Activated CD8-positive, alpha-beta T cell treated with anti-CD3 and anti-CD28 coated beads for 36 hours (primary cell): ENCODE measurements at regions of chr19 and their contacts with region 1.

Region 1: GRCh38 chr19:38402967-38403861 is at the start of gene FAM98C:
- DNase-seq: no peak
- ATAC-seq: peak; percentile 99
- H3K4me3 Mint-ChIP-seq: peak within 1 kb of the TSS; percentile 83
- H3K27ac Mint-ChIP-seq: peak within 1 kb of the TSS; percentile 88
- H3K4me1 Mint-ChIP-seq: peaks cover 9% of the 10 kb centered on the region
- H3K27me3 Mint-ChIP-seq: peaks cover 3% of the 10 kb centered on the region
- CTCF ChIP-seq: peak; percentile 99
- total RNA-seq, gene FAM98C: 11.7 to 12.5 TPM

Region 2: DNA sequence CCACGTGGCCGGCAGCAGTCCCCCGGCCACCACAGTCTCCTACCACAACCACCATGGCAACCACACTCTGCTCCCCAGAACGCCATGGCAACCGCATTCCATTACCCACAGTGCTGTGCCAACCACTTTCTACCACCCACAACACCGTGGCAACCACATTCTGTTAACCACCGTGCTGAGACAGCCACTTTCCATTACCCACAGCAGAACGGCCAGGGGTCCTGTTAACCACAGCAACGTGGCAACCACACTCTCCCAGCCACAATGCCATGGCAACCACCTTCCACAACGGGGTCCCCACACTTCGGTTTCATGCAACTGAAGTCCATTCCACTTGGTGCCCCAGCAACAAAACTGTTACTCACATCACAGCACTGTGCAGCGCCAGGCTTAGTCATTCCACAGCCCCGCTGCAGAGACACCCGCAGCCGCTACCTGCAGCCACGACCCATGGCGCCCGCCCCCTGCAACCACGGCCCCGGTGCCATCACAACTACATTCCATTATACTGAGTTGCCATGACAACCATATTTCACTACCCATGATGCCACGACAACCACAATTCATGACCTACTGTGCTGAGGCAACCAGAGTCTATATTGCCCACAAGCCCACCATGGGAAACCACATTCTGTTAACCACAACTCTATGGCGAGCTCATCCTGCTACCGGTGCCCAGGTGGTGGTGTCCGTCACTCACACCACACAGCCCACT is 189.1 kb before region 1 on chr19:
- CTCF ChIA-PET with region 1: no interaction called
- POLR2A ChIA-PET with region 1: no interaction called
- intact Hi-C with region 1: no loop called
- DNase-seq: peak; percentile 92
- ATAC-seq: peak; percentile 90
- H3K4me3 Mint-ChIP-seq: peak overlapping the region; percentile 63
- H3K27ac Mint-ChIP-seq: peak overlapping the region; percentile 84
- H3K4me1 Mint-ChIP-seq: peaks cover 23% of the 10 kb centered on the region
- H3K27me3 Mint-ChIP-seq: peaks cover 60% of the 10 kb centered on the region
- CTCF ChIP-seq: no peak

Region 3: DNA sequence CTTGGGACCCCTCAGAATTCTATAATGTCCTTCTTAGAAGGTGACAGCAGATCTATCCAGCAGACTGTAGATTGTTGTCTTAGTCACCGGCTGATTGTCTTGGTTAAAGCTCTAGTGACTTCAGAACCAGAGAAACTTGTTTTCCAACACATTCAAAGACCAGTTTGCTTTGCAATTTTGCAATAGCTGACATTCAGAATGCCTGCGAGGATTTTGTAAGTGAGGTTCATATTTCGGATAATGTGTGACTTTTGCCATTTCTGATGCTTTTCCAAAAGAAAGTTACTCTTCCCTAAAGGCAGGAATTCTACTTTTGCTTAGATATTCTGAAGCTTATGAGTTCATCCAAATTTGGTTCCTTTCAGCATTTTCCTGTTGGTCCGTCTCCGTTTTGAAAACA is 125.7 kb before region 1 on chr19:
- CTCF ChIA-PET with region 1: no interaction called
- POLR2A ChIA-PET with region 1: no interaction called
- intact Hi-C with region 1: no loop called
- DNase-seq: no peak
- ATAC-seq: no peak
- H3K4me3 Mint-ChIP-seq: no peak overlapping the region
- H3K27ac Mint-ChIP-seq: no peak overlapping the region
- H3K4me1 Mint-ChIP-seq: peaks cover 14% of the 10 kb centered on the region
- H3K27me3 Mint-ChIP-seq: no peaks in the 10 kb centered on the region
- CTCF ChIP-seq: no peak

Region 4: DNA sequence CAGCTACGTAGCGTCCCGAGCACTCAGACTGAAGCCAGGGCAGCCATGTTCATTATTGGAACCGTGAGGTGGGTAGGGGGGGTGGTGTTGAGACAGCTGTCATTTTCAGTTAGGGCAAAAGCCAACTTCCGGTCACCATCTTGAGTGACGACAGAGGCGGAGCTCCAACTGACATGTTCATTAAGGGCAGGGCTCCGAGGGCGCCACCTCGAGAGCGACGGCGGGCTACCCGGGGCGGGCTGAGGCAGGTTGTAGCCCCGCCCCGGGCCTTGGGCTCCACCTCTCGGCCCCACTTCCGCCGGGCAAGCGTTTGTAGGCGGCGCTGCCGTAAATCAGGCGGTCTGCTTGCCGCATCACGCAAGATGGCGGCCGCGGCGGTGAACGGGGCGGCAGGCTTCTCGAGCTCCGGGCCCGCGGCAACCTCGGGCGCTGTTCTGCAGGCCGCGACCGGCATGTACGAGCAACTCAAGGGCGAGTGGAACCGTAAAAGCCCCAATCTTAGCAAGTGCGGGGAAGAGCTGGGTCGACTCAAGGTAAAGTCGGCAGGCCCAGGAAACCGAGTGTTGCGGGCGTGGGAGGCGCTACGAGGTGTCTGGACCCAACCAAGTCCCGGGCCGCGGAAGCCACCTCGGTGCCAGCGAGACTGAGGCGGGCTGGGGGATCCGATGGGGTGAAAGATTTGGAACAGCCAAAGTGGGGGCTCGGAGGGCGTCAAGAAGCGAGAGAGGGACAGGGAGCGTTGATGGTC is 28.6 kb before region 1 on chr19 and contains the start of gene PSMD8:
- CTCF ChIA-PET with region 1: interaction called, 30 read pairs
- POLR2A ChIA-PET with region 1: interaction called, 3 read pairs
- intact Hi-C with region 1: no loop called
- DNase-seq: peak; percentile 100
- ATAC-seq: peak; percentile 99
- H3K4me3 Mint-ChIP-seq: peak within 1 kb of the TSS; percentile 100
- H3K27ac Mint-ChIP-seq: peak within 1 kb of the TSS; percentile 99
- H3K4me1 Mint-ChIP-seq: peaks cover 23% of the 10 kb centered on the region
- H3K27me3 Mint-ChIP-seq: peaks cover 1% of the 10 kb centered on the region
- CTCF ChIP-seq: no peak
- total RNA-seq, gene PSMD8: 178 to 191 TPM

Region 5: GRCh38 chr19:38417544-38418506 is 14.6 kb after region 1 on chr19:
- CTCF ChIA-PET with region 1: interaction called, 35 read pairs
- POLR2A ChIA-PET with region 1: interaction called, 3 read pairs
- intact Hi-C with region 1: no loop called
- DNase-seq: peak; percentile 76
- ATAC-seq: peak; percentile 93
- H3K4me3 Mint-ChIP-seq: peak overlapping the region; percentile 73
- H3K27ac Mint-ChIP-seq: peak overlapping the region; percentile 39
- H3K4me1 Mint-ChIP-seq: peaks cover 14% of the 10 kb centered on the region
- H3K27me3 Mint-ChIP-seq: no peaks in the 10 kb centered on the region
- CTCF ChIP-seq: no peak

Region 6: DNA sequence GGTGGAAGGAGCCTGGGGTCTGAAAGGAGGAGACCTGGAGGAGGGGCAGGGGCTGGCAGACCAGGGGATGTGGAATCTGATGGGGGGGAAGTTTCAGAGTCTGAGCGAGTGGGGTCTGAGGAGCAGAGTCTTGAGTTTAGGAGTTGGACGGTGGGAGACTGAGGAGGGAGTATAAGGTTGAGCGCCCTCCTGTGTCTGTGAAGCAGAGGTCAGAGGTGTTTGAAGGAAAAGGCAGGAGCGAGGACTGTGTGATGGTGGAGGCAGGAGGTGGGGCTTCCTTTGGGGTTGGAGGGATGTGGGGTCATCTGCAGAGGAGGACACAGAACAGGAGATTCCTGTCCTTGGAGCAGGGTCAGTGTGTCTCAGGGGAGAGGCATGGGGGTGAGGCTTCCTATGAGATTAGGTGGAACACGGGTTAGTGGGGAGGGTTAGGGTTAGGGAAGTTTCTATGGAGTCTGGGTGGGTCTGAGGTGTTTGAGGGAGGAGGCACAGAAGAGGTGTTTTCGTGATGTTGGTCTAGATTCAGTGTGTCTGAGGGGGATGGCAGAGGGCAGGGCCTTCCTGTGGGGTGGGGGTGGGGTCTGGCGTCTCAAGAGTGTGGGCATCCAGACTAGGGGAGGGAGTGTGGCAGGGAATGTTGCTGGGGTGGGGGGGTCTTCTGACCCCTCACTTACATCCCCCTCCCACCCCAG is 38.6 kb after region 1 on chr19:
- CTCF ChIA-PET with region 1: interaction called, 12 read pairs
- POLR2A ChIA-PET with region 1: no interaction called
- intact Hi-C with region 1: no loop called
- DNase-seq: peak; percentile 43
- ATAC-seq: peak; percentile 94
- H3K4me3 Mint-ChIP-seq: no peak overlapping the region
- H3K27ac Mint-ChIP-seq: no peak overlapping the region
- H3K4me1 Mint-ChIP-seq: no peaks in the 10 kb centered on the region
- H3K27me3 Mint-ChIP-seq: peaks cover 11% of the 10 kb centered on the region
- CTCF ChIP-seq: no peak

Region 7: GRCh38 chr19:38618590-38619360 is 215.6 kb after region 1 on chr19 and contains the start of gene EIF3K:
- CTCF ChIA-PET with region 1: interaction called, 28 read pairs
- POLR2A ChIA-PET with region 1: no interaction called
- intact Hi-C with region 1: no loop called
- DNase-seq: peak; percentile 99
- ATAC-seq: peak; percentile 74
- H3K4me3 Mint-ChIP-seq: peak within 1 kb of the TSS; percentile 99
- H3K27ac Mint-ChIP-seq: peak within 1 kb of the TSS; percentile 99
- H3K4me1 Mint-ChIP-seq: peaks cover 44% of the 10 kb centered on the region
- H3K27me3 Mint-ChIP-seq: no peaks in the 10 kb centered on the region
- CTCF ChIP-seq: no peak
- total RNA-seq, gene EIF3K: 306 to 308 TPM